ENCODE measurements at regions of chr13 and their contacts with region 1.

Region 1: DNA sequence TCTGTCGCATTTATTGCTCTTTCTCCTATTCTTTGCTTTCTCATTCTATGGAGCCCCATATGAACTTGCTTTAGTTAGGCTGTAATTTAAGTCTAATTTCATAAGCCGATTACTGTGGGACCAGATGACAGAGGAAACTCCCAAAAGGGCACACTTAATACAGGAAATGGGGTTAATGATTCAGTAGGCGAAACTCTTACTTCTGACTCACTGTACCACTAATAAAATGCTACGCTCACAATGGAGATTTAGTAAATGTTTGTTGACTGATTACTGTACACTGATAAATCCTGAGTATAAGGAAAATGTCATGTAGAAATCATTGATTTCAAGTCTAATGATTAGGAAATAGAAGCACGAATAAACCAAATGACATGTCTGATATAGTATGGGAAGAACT is 276.4 kb downstream of the KLF5 start:
- DNase-seq: peak; percentile 95
- H3K4me3 ChIP-seq: no peak overlapping the region
- H3K27ac ChIP-seq: peak overlapping the region; percentile 100
- H3K4me1 ChIP-seq: peaks cover 48% of the 10 kb centered on the region
- H3K27me3 ChIP-seq: no peaks in the 10 kb centered on the region
- CTCF ChIP-seq: no peak

Region 2: GRCh38 chr13:73058736-73059459 is 276.3 kb before region 1 on chr13 and contains the start of gene KLF5:
- CTCF ChIA-PET with region 1: no interaction called
- dilution Hi-C with region 1: no loop called
- in situ Hi-C with region 1: no loop called
- intact Hi-C with region 1: loop called (anchors 2 kb)
- DNase-seq: peak; percentile 99
- H3K4me3 ChIP-seq: peak within 1 kb of the TSS; percentile 61 to 99 (median 86)
- H3K27ac ChIP-seq: peak within 1 kb of the TSS; percentile 99
- H3K4me1 ChIP-seq: peaks cover 43% of the 10 kb centered on the region
- H3K27me3 ChIP-seq: no peaks in the 10 kb centered on the region
- CTCF ChIP-seq: no peak
- total RNA-seq, gene KLF5: 34.3 to 175 TPM

Region 3: DNA sequence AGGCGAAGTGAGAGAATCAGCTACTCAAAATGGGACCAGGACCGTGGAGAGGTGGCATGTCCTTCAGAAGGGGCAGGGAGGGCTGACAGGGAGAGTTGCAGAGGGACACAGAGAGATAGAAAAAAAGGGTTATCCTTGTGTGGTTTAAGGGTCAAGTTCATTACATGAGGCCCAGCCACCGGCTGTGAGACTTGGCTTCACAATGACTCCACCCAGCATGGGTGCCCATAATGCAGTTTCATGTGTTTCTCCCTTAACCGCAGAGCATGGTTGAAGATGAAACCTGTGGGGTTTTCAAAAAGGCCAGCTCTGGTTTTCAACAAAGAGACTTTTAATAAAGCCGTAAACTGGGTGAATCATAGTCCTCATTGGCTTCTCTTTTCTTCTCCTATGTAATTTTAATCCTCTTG is 111.8 kb before region 1 on chr13:
- CTCF ChIA-PET with region 1: no interaction called
- dilution Hi-C with region 1: no loop called
- in situ Hi-C with region 1: loop called in 1 of 2 experiments (anchors 10 kb)
- intact Hi-C with region 1: loop called (anchors 1 kb)
- DNase-seq: peak; percentile 78
- H3K4me3 ChIP-seq: no peak overlapping the region
- H3K27ac ChIP-seq: no peak overlapping the region
- H3K4me1 ChIP-seq: peaks cover 11% of the 10 kb centered on the region
- H3K27me3 ChIP-seq: no peaks in the 10 kb centered on the region
- CTCF ChIP-seq: no peak

Region 4: GRCh38 chr13:73259061-73260017 is 75.9 kb before region 1 on chr13:
- CTCF ChIA-PET with region 1: no interaction called
- dilution Hi-C with region 1: no loop called
- in situ Hi-C with region 1: no loop called
- intact Hi-C with region 1: loop called (anchors 2 kb)
- DNase-seq: no peak
- H3K4me3 ChIP-seq: no peak overlapping the region
- H3K27ac ChIP-seq: no peak overlapping the region
- H3K4me1 ChIP-seq: peaks cover 29% of the 10 kb centered on the region
- H3K27me3 ChIP-seq: no peaks in the 10 kb centered on the region
- CTCF ChIP-seq: no peak

Region 5: DNA sequence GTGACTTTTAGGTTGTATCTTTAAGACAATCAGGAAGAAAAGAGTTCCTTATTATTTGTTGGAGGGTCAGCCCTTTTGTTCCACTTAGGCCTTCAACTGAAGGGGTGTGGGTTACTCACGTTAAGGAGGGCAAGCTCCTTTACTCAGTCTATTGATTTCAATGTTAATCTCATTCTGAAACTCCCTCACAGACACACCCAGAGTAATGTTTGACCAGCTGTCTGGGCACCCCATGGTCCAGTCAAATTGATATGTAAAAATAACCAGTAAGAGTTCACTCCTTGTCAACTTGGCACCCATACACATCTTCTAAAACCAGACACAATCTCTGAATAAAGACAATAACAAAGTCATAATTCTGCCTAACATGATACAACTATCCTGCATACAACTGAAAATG is 16.5 kb after region 1 on chr13:
- CTCF ChIA-PET with region 1: no interaction called
- dilution Hi-C with region 1: no loop called
- in situ Hi-C with region 1: no loop called
- intact Hi-C with region 1: no loop called
- DNase-seq: no peak
- H3K4me3 ChIP-seq: no peak overlapping the region
- H3K27ac ChIP-seq: no peak overlapping the region
- H3K4me1 ChIP-seq: peaks cover 4% of the 10 kb centered on the region
- H3K27me3 ChIP-seq: no peaks in the 10 kb centered on the region
- CTCF ChIP-seq: no peak

Region 6: DNA sequence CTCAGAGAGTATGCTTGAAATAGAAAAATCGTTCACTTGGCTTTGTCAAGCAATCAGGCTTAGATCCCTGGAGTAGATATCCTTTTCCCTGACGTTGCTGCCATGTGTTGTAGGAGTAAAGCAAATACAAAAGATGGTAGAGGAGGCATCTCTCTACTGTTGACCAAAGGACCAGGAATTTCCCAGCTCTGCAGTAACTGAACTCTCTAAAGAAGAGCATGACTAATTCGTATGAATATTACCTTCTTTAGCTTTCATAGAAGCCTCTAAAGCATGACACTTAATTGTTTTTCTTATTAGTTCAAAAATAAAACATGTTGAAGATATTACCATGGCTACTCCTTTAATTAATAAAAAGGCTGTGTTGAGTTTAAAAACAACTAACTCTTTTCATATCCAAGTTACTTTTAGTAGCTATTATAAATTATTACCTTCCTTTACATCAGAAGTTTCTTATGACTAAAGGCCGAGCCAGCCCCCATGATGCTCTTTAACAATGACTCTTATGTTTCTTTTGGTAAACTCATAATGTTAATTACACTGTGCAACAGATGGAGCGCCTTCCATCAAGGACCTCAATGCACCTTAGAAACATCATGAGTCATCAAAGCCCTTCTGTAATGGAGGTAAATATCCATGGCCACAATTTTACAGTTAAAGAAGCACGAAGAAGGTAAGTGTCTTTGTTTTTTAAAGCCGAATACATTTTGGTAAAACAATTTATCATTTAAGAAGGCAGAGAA is 76.0 kb after region 1 on chr13:
- CTCF ChIA-PET with region 1: no interaction called
- dilution Hi-C with region 1: no loop called
- in situ Hi-C with region 1: no loop called
- intact Hi-C with region 1: loop called (anchors 1 kb)
- DNase-seq: peak; percentile 90
- H3K4me3 ChIP-seq: no peak overlapping the region
- H3K27ac ChIP-seq: peak overlapping the region; percentile 85
- H3K4me1 ChIP-seq: peaks cover 33% of the 10 kb centered on the region
- H3K27me3 ChIP-seq: no peaks in the 10 kb centered on the region
- CTCF ChIP-seq: no peak

Region 7: GRCh38 chr13:73544175-73544574 is 209.0 kb after region 1 on chr13:
- CTCF ChIA-PET with region 1: no interaction called
- dilution Hi-C with region 1: no loop called
- in situ Hi-C with region 1: no loop called
- intact Hi-C with region 1: loop called (anchors 10 kb)
- DNase-seq: no peak
- H3K4me3 ChIP-seq: no peak overlapping the region
- H3K27ac ChIP-seq: no peak overlapping the region
- H3K4me1 ChIP-seq: peaks cover 18% of the 10 kb centered on the region
- H3K27me3 ChIP-seq: no peaks in the 10 kb centered on the region
- CTCF ChIP-seq: peak in 1 of 2 donors; percentile 27